Mammary epithelial cell (primary cell): ENCODE measurements at regions of chr16 and their contacts with region 1.

Region 1: GRCh38 chr16:73172241-73172972 is 124.5 kb upstream of the ZFHX3 start:
- DNase-seq: peak; percentile 42
- H3K4me3 ChIP-seq: no peak overlapping the region
- H3K27ac ChIP-seq: no peak overlapping the region
- H3K4me1 ChIP-seq: no peaks in the 10 kb centered on the region
- H3K27me3 ChIP-seq: no peaks in the 10 kb centered on the region
- CTCF ChIP-seq: peak in 1 of 2 donors; percentile 39

Region 2: DNA sequence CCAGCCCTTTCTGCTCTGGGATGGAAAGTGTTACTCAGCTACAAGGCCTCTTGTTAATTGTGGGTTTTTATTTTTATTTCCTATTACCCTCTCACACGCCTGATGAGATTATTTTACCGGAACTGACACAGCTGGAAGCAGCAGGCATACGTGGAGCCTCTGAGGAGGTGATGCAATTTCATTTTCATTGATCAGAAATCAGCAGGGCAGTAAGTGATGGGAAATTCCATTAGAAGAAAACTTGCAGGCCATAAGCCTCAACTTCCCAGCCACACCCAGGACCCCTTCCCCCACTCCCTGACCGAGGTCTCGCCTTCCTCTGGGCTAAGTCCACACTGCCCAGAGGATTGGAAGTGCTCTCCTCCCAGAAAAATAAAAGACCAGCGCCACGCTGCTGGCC is 194.2 kb before region 1 on chr16:
- CTCF ChIA-PET with region 1: no interaction called
- dilution Hi-C with region 1: no loop called
- in situ Hi-C with region 1: no loop called
- intact Hi-C with region 1: loop called (anchors 10 kb)
- DNase-seq: no peak
- H3K4me3 ChIP-seq: no peak overlapping the region
- H3K27ac ChIP-seq: no peak overlapping the region
- H3K4me1 ChIP-seq: peaks cover under 1% of the 10 kb centered on the region
- H3K27me3 ChIP-seq: no peaks in the 10 kb centered on the region
- CTCF ChIP-seq: no peak

Region 3: DNA sequence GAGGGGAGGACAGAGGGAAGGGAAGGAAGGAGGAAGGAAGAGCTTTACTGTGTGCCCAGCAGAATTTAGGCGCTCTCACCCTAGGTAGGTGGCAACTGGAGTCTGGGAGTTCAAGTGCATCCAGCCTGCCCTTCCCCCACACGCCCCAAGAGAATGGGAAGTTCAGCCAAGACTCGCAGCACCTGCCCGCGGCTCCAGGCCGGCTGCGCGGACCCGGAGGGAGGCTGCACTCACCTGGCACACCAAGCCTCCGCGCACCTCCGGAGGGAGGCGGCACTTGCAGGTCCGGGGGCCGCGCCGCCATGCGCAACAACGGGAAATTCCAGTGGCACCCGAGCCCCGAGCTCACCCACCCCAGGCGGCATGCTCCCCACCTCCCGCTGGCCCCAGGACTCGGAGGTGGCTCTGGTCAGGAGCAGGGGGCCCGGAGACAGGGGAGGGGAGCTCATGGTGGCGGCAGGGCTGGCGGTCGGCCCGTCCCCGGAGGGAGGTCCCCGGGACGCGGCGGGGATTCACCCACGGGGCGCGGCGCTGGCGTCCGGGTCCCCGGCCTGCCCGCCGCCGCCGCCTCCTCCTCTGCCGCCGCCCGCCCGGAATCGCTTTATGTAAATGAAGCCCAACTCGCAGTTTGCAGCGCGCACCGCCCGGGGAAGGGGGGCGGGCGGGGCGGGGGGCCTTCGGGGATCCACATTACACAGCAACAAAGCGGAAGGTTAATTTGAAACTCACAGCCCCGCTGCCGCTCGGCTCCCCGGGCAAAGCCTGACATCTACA is 124.7 kb before region 1 on chr16 and contains the start of gene ZFHX3:
- CTCF ChIA-PET with region 1: interaction called, 7 read pairs
- dilution Hi-C with region 1: no loop called
- in situ Hi-C with region 1: no loop called
- intact Hi-C with region 1: loop called (anchors 2 kb)
- DNase-seq: peak; percentile 70
- H3K4me3 ChIP-seq: peak within 1 kb of the TSS; percentile 56 to 74 (median 57)
- H3K27ac ChIP-seq: peak within 1 kb of the TSS; percentile 34
- H3K4me1 ChIP-seq: peaks cover 22% of the 10 kb centered on the region
- H3K27me3 ChIP-seq: no peaks in the 10 kb centered on the region
- CTCF ChIP-seq: peak in 1 of 2 donors; percentile 9
- total RNA-seq, gene ZFHX3: 6.7 to 11.3 TPM

Region 4: GRCh38 chr16:73058221-73058615 is 114.2 kb before region 1 on chr16:
- CTCF ChIA-PET with region 1: no interaction called
- dilution Hi-C with region 1: no loop called
- in situ Hi-C with region 1: loop called in 1 of 2 experiments (anchors 10 kb)
- intact Hi-C with region 1: loop called (anchors 1 kb)
- DNase-seq: peak; percentile 54
- H3K4me3 ChIP-seq: peak overlapping the region; percentile 55 to 64 (median 61)
- H3K27ac ChIP-seq: no peak overlapping the region
- H3K4me1 ChIP-seq: peaks cover 47% of the 10 kb centered on the region
- H3K27me3 ChIP-seq: no peaks in the 10 kb centered on the region
- CTCF ChIP-seq: no peak

Region 5: DNA sequence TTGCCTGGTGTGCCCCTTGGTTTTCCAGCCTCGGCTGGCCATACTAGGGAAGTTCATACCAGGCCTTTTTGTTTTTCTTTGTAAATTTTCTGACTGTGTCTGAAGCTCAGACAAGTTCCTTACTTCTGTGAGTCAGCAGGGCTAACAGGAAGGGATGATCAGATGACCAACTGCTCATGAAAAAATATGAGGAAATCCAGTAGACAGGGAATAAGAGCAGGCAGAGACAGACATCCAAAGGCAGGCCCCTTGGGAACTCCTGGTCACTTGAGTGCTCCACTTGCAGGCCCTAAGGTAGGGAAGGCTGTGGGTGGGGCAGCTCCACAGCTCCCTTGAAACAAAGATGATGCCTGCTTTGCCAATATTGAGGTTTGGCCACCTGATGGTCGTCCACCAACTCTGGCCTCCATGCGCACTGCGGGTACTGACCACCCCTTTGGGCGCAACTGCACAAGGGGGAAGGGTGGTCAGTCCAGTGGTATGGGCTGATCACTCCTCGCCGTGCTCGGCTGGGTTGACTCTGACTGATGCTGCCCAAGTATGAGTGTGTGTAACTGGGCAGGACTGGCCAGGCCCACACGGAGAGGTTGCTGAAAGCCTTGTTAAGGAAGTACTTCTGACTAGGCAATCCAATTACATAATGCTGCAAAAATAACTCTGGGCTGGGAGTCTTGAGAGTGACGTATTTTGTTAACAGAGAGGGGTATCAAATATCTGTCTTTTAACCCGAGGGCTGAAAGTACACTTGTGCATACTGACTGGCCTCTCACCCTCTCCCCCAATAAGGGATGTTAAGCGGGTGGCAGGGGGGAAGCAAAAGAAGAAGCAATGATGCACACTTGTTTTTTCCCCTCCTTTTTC is 103.6 kb before region 1 on chr16:
- CTCF ChIA-PET with region 1: interaction called, 19 read pairs
- dilution Hi-C with region 1: no loop called
- in situ Hi-C with region 1: loop called in 1 of 2 experiments (anchors 10 kb)
- intact Hi-C with region 1: loop called (anchors 1 kb)
- DNase-seq: peak; percentile 85
- H3K4me3 ChIP-seq: no peak overlapping the region
- H3K27ac ChIP-seq: peak overlapping the region; percentile 54
- H3K4me1 ChIP-seq: peaks cover 48% of the 10 kb centered on the region
- H3K27me3 ChIP-seq: no peaks in the 10 kb centered on the region
- CTCF ChIP-seq: no peak

Region 6: DNA sequence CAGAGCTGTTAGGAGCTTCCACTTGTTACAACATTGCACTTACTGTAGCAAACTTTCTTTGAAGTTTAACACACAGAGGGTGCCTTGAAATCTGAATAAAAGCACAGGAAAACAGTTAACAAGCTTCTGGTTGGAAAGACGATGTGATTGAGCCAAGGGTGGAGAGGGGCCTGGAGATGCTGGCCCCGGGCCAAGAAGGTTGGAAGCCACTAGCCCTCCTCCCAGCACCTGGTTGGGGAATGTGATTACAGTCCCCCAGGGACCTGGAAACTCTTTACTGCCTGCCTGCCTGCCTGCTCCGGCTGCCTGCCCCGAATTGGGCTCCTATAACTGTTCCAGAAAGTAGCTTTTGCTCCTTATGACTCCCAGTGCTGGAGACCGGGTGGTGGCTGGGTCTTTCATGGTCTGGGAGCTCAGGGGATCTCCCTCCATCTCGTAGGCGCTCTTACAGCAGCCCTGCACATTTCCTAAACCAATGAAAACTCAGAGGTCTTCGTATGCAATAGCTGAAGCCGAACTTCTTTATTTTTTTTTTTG is 76.5 kb before region 1 on chr16:
- CTCF ChIA-PET with region 1: interaction called, 13 read pairs
- dilution Hi-C with region 1: no loop called
- in situ Hi-C with region 1: no loop called
- intact Hi-C with region 1: no loop called
- DNase-seq: no peak
- H3K4me3 ChIP-seq: no peak overlapping the region
- H3K27ac ChIP-seq: no peak overlapping the region
- H3K4me1 ChIP-seq: no peaks in the 10 kb centered on the region
- H3K27me3 ChIP-seq: no peaks in the 10 kb centered on the region
- CTCF ChIP-seq: no peak

Region 7: GRCh38 chr16:73131156-73131862 is 41.1 kb before region 1 on chr16:
- CTCF ChIA-PET with region 1: no interaction called
- dilution Hi-C with region 1: no loop called
- in situ Hi-C with region 1: no loop called
- intact Hi-C with region 1: no loop called
- DNase-seq: no peak
- H3K4me3 ChIP-seq: no peak overlapping the region
- H3K27ac ChIP-seq: no peak overlapping the region
- H3K4me1 ChIP-seq: no peaks in the 10 kb centered on the region
- H3K27me3 ChIP-seq: no peaks in the 10 kb centered on the region
- CTCF ChIP-seq: no peak